Activated naive CD4-positive, alpha-beta T cell treated with anti-CD3 and anti-CD28 coated beads for 36 hours (primary cell): ENCODE measurements at regions of chr19 and their contacts with region 1.

Region 1: GRCh38 chr19:21082011-21082975 is at the start of gene ZNF714:
- DNase-seq: peak; percentile 93
- H3K4me3 Mint-ChIP-seq: peak within 1 kb of the TSS; percentile 98
- H3K27ac Mint-ChIP-seq: peak within 1 kb of the TSS; percentile 95
- H3K4me1 Mint-ChIP-seq: peaks cover 29% of the 10 kb centered on the region
- H3K27me3 Mint-ChIP-seq: no peaks in the 10 kb centered on the region
- total RNA-seq, gene ZNF714: 21.1 to 23.1 TPM

Region 2: DNA sequence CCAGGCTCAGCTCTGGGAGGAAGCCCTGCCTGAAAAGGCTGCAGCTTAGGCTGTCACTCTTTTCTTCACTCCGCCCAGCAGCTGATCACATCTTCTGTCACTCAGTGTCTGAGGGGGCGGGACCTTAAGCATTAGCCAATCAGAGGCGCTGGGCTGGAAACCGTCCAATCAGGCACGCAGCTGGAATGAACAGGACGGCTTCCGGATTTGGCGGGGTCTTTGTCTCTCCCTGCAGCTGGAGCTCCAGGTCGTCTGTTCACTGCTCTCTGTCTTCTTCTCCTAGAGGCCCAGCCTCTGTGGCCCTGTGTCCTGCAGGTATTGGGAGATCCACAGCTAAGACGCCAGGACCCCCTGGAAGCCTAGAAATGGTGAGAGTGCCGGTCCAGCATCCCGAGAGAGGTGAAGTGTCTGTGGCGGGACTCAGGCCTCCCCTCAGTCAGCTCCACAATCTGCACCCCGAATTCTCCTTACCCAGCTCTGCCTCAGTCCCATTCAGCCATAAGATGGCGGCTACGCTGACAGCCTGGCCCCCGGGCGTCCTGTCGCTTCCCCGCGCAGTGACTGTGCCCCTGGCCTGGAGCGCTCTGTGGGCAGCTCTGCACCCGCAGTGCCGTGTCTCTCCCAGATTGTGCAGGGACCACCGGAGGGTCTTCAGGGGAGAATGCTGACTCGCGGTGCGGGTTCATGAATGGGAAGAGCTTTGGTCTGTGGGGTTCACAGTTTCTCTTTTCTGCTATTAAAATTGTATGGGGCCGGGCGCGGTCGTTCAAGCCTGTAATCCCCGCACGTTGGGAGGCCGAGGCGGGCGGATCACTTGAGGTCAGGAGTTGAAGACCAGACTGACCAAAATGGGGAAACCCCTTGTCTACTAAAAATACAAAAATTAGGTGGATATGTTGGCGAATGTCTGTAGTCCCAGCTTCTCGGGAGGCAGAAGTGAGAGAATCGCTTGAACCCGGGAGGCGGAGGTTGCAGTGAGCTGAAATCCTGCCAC is 305.9 kb before region 1 on chr19 and contains the start of gene ZNF66:
- CTCF ChIA-PET with region 1: no interaction called
- intact Hi-C with region 1: loop called (anchors 1 kb)
- DNase-seq: peak; percentile 98
- H3K4me3 Mint-ChIP-seq: peak within 1 kb of the TSS; percentile 100
- H3K27ac Mint-ChIP-seq: peak within 1 kb of the TSS; percentile 95
- H3K4me1 Mint-ChIP-seq: peaks cover 18% of the 10 kb centered on the region
- H3K27me3 Mint-ChIP-seq: no peaks in the 10 kb centered on the region
- total RNA-seq, gene ZNF66: 3.9 to 4.9 TPM

Region 3: DNA sequence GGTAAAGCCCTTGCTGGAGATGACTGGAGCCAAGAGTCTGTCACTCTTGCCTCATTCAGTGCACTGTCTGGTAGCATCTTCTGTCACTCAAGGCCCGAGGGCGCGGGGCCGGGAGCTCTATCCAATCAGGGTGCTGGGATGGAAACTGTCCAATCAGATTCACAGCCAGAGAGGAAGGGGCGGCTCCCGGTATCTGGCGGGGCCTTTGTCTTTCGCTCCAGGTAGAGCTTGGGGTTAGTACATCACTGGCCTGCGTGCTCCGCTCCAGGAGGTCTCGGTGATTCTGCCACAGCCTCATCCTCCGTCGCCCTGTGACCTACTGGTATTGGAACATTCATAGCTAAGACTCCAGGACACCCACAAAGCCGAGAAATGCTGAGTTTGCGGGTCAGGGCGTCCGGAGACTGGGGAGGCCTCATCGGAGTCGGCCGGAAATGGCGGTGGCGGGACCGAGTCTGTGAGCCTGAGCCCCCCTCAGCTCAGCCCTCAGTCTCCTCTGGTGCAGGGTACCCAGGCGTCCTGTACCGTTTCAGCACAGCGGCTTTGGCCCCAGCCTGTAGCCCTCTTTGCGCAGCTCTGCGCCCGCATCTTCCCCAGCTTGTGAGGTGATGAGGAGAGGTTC is 82.5 kb before region 1 on chr19:
- CTCF ChIA-PET with region 1: no interaction called
- intact Hi-C with region 1: loop called (anchors 1 kb)
- DNase-seq: peak; percentile 96
- H3K4me3 Mint-ChIP-seq: peak overlapping the region; percentile 97
- H3K27ac Mint-ChIP-seq: peak overlapping the region; percentile 87
- H3K4me1 Mint-ChIP-seq: peaks cover 3% of the 10 kb centered on the region
- H3K27me3 Mint-ChIP-seq: no peaks in the 10 kb centered on the region

Region 4: DNA sequence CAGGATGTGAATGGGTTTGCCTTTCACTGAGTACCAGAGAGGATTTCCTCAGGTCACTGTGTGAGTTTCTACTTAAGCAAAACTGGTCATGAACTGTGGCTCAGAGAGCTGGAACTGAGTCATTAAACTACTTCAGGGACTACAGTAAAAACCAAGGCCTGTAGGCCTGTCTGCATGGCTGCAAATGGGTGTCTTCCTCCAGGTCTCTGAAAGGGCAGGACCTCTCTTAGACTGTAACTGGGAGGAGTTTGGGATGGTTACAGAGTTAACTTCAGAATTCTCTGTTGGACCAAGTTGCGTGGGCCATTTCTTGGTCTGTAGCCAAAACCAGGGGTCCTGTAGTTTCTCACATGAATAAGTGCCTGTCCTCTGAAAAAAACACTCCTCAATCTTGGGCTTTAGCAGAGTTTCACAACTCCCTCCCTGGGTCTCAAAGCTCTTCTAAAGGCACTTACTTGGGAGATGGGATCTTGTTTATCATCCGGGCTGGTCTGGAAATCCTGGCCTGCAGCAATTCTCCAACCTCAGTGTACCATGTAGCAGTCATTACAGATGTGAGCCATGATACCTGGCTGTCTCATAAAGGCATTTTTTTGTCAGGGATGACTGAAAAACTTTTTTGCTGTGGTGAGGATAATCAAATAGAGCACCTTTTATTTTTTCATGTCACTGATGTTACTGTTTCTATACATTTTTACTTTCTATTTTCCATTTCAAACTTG is 19.4 kb after region 1 on chr19:
- CTCF ChIA-PET with region 1: no interaction called
- intact Hi-C with region 1: no loop called
- DNase-seq: no peak
- H3K4me3 Mint-ChIP-seq: no peak overlapping the region
- H3K27ac Mint-ChIP-seq: no peak overlapping the region
- H3K4me1 Mint-ChIP-seq: no peaks in the 10 kb centered on the region
- H3K27me3 Mint-ChIP-seq: no peaks in the 10 kb centered on the region

Region 5: GRCh38 chr19:21210037-21210621 is 127.8 kb after region 1 on chr19:
- CTCF ChIA-PET with region 1: no interaction called
- intact Hi-C with region 1: no loop called
- DNase-seq: no peak
- H3K4me3 Mint-ChIP-seq: no peak overlapping the region
- H3K27ac Mint-ChIP-seq: no peak overlapping the region
- H3K4me1 Mint-ChIP-seq: no peaks in the 10 kb centered on the region
- H3K27me3 Mint-ChIP-seq: peaks cover 9% of the 10 kb centered on the region